ENCODE measurements at regions of chr13 and their contacts with region 1.

Region 1: DNA sequence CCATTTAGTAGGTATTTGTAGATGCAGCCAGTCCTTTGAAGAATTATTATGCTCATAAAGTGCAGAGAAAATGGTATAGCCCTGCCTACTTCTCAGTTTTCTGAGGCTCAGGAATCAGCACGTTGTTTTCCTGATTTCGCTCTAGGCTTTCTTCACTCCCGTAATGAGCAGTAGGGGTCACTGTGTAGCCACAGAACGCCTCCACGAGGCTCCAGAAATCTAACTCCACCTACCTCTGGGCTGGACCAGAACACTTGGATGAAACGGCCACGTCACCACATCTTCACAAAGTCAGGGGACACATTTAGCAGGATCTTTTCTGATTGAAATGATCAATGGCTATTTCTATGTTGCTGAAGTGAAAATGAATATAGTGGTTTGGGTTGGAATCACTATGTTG is 49.8 kb upstream of the GTF3A start:
- DNase-seq: peak; percentile 57
- H3K4me3 Mint-ChIP-seq: no peak overlapping the region
- H3K27ac Mint-ChIP-seq: no peak overlapping the region
- H3K4me1 Mint-ChIP-seq: no peaks in the 10 kb centered on the region
- H3K27me3 Mint-ChIP-seq: peaks cover 26% of the 10 kb centered on the region
- CTCF ChIP-seq: peak; percentile 45

Region 2: GRCh38 chr13:27442071-27442647 is 67.5 kb after region 1 on chr13:
- CTCF ChIA-PET with region 1: no interaction called
- intact Hi-C with region 1: no loop called
- DNase-seq: no peak
- H3K4me3 Mint-ChIP-seq: peak overlapping the region; percentile 1
- H3K27ac Mint-ChIP-seq: no peak overlapping the region
- H3K4me1 Mint-ChIP-seq: peaks cover 15% of the 10 kb centered on the region
- H3K27me3 Mint-ChIP-seq: no peaks in the 10 kb centered on the region
- CTCF ChIP-seq: no peak

Region 3: DNA sequence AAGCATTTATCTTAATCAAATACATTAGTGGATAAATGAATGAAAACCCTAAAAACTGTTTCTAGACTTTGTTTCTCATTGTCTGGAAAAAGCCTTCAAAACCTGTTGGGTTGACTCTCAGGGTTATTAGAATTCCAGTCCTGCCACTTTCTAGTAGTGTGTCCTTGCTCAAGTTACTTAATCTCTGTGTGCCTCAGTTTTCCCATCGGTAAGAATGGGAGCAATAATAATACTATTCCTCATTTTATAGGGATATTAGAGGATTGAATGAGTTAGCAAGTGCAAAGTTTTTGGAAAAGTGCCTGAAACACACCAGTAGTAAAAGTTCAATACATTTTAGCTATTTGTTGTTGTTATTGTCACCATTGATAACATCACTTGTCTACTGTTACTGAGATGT is 611.0 kb after region 1 on chr13:
- CTCF ChIA-PET with region 1: no interaction called
- intact Hi-C with region 1: loop called (anchors 2 kb)
- DNase-seq: no peak
- H3K4me3 Mint-ChIP-seq: no peak overlapping the region
- H3K27ac Mint-ChIP-seq: no peak overlapping the region
- H3K4me1 Mint-ChIP-seq: no peaks in the 10 kb centered on the region
- H3K27me3 Mint-ChIP-seq: peaks cover 52% of the 10 kb centered on the region
- CTCF ChIP-seq: no peak

Measured in Calu3 (cell line).